Naive thymus-derived CD4-positive, alpha-beta T cell (primary cell): ENCODE measurements at regions of chr21 and their contacts with region 1.

Region 1: GRCh38 chr21:37267269-37268184 is at the start of gene VPS26C:
- DNase-seq: peak; percentile 91 to 98 (median 97)
- ATAC-seq: peak; percentile 93
- H3K4me3 ChIP-seq: peak within 1 kb of the TSS; percentile 95
- H3K4me3 Mint-ChIP-seq: peak within 1 kb of the TSS; percentile 88 to 96 (median 94)
- H3K27ac ChIP-seq: peak within 1 kb of the TSS; percentile 90
- H3K27ac Mint-ChIP-seq: peak within 1 kb of the TSS; percentile 94 to 99 (median 98)
- H3K4me1 ChIP-seq: peaks cover 5 to 7% of the 10 kb centered on the region in 2 donors
- H3K4me1 Mint-ChIP-seq: peaks cover 14 to 62% (median 46%) of the 10 kb centered on the region in 7 donors
- H3K27me3 ChIP-seq: no peaks in the 10 kb centered on the region
- H3K27me3 Mint-ChIP-seq: peaks cover 0 to 11% (median 0%) of the 10 kb centered on the region in 5 donors
- total RNA-seq, gene VPS26C: 46.8 to 83.5 (median 77.7) TPM

Region 2: DNA sequence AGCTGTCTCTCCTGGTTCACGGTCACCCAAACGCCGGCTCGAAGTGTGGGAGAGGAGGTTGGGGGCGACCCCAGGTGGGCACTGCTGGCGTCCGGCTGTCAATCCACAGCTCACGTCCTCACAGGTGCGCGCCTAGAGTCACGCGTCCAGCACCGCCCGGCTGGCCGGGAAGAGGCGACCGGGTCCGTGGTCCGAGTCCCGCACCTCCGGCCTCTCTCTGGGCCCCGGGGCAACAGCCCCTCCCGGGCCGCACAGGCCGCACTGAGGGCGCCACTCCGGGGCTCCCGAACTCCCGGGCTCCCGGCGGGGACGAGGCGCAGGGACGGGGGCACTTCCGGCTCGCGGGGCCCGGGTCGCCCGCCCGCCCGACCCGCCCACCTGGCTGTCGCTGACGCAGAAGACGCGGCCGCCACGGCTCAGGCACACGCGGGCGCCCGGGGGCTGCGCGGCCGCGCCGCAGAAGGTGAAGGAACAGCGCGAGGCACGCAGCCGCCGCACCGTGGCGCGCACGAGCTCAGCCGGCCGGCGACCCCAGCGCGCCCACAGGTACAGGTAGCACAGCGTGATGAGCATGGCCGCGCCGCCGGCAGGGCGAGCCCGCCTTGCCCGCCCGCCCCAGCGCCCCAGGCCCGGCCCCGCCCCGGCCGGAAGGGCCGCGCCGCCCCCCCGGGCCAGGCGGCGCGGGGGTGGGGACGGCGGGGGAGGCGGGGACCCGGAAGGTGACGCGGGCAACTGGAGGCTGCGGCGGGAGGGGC is 301.3 kb before region 1 on chr21 and contains the start of gene HLCS:
- CTCF ChIA-PET with region 1: no interaction called
- POLR2A ChIA-PET with region 1: no interaction called
- intact Hi-C with region 1: loop called (anchors 5 kb)
- DNase-seq: peak; percentile 62 to 79 (median 72)
- ATAC-seq: peak; percentile 93
- H3K4me3 ChIP-seq: peak within 1 kb of the TSS; percentile 52
- H3K4me3 Mint-ChIP-seq: peak within 1 kb of the TSS; percentile 80 to 91 (median 85)
- H3K27ac ChIP-seq: peak within 1 kb of the TSS; percentile 75
- H3K27ac Mint-ChIP-seq: peak within 1 kb of the TSS; percentile 77 to 92 (median 91)
- H3K4me1 ChIP-seq: peaks cover 0 to 6% of the 10 kb centered on the region in 2 donors
- H3K4me1 Mint-ChIP-seq: peaks cover 8 to 25% (median 12%) of the 10 kb centered on the region in 7 donors
- H3K27me3 ChIP-seq: no peaks in the 10 kb centered on the region
- H3K27me3 Mint-ChIP-seq: no peaks in the 10 kb centered on the region
- total RNA-seq, gene HLCS: 8.8 to 19.3 (median 12.2) TPM

Region 3: DNA sequence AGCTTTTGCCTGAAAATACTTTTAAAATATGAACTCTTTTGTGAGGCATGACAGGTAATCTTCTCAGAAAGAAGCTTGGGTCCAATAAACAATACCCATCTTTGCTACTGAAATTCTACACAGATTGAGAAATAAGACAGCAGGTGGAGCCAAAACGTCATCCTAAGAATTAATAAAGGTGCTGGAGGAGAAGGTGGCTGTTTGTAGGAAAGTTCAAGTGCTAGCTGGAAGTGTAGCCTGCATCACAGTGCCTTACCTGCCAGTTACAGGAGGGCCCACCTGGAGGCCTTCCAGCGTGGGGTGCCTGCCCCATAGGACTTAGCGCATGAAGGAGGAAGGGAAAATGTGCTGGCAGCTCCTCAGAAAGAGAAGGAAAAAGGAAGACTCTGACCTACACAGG is 100.8 kb before region 1 on chr21:
- CTCF ChIA-PET with region 1: no interaction called
- POLR2A ChIA-PET with region 1: no interaction called
- intact Hi-C with region 1: loop called in 1 of 2 experiments (anchors 5 kb)
- DNase-seq: peak in 3 of 9 donors; percentile 2 to 8 (median 5)
- ATAC-seq: no peak
- H3K4me3 ChIP-seq: no peak overlapping the region
- H3K4me3 Mint-ChIP-seq: no peak overlapping the region
- H3K27ac ChIP-seq: no peak overlapping the region
- H3K27ac Mint-ChIP-seq: peak overlapping the region in 2 of 9 donors; percentile 67 to 88
- H3K4me1 ChIP-seq: no peaks in the 10 kb centered on the region
- H3K4me1 Mint-ChIP-seq: peaks cover 0 to 12% (median 3%) of the 10 kb centered on the region in 7 donors
- H3K27me3 ChIP-seq: no peaks in the 10 kb centered on the region
- H3K27me3 Mint-ChIP-seq: no peaks in the 10 kb centered on the region

Region 4: GRCh38 chr21:37208056-37208721 is 59.3 kb before region 1 on chr21:
- CTCF ChIA-PET with region 1: no interaction called
- POLR2A ChIA-PET with region 1: no interaction called
- intact Hi-C with region 1: no loop called
- DNase-seq: peak in 1 of 9 donors; percentile 34
- ATAC-seq: peak; percentile 86
- H3K4me3 ChIP-seq: no peak overlapping the region
- H3K4me3 Mint-ChIP-seq: peak overlapping the region in 8 of 10 donors; percentile 3 to 77 (median 44)
- H3K27ac ChIP-seq: no peak overlapping the region
- H3K27ac Mint-ChIP-seq: peak overlapping the region in 5 of 9 donors; percentile 0 to 78 (median 35)
- H3K4me1 ChIP-seq: no peaks in the 10 kb centered on the region
- H3K4me1 Mint-ChIP-seq: peaks cover 10 to 19% (median 15%) of the 10 kb centered on the region in 7 donors
- H3K27me3 ChIP-seq: no peaks in the 10 kb centered on the region
- H3K27me3 Mint-ChIP-seq: peaks cover 0 to 7% (median 3%) of the 10 kb centered on the region in 5 donors

Region 5: DNA sequence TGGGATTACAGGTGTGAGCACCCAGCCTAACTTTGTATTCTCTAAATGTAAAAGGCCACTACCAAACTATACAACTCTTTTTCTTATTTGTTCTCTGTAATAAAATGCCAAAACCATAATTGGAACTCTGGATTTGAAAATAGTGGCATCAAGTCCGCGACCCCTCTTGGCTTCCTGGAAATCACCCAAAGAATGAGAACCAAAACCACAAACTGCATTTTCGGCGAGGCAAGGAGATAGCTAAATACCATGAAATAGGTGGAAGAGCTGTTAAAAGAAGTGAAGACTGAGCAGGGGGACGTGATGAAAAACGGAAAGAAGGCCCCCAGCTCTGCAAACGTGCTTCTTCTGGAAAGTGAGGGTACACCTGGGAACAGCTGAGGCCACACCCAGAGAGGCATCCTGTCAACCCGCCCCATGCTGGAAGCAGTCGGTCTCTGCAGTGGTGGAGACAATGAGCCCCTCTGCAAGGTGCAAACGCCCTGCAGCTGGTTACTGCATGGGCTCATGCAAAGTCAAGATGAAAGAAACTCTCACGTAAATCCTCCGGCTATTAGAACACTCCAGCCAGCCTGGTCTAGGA is 22.9 kb before region 1 on chr21:
- CTCF ChIA-PET with region 1: no interaction called
- POLR2A ChIA-PET with region 1: interaction called, 8 read pairs
- intact Hi-C with region 1: loop called in 1 of 2 experiments (anchors 2 kb)
- DNase-seq: peak in 1 of 9 donors; percentile 11
- ATAC-seq: peak; percentile 18
- H3K4me3 ChIP-seq: no peak overlapping the region
- H3K4me3 Mint-ChIP-seq: peak overlapping the region; percentile 54 to 87 (median 73)
- H3K27ac ChIP-seq: peak overlapping the region; percentile 39
- H3K27ac Mint-ChIP-seq: peak overlapping the region; percentile 60 to 88 (median 78)
- H3K4me1 ChIP-seq: peaks cover 20 to 21% of the 10 kb centered on the region in 2 donors
- H3K4me1 Mint-ChIP-seq: peaks cover 56 to 78% (median 72%) of the 10 kb centered on the region in 7 donors
- H3K27me3 ChIP-seq: no peaks in the 10 kb centered on the region
- H3K27me3 Mint-ChIP-seq: no peaks in the 10 kb centered on the region

Region 6: DNA sequence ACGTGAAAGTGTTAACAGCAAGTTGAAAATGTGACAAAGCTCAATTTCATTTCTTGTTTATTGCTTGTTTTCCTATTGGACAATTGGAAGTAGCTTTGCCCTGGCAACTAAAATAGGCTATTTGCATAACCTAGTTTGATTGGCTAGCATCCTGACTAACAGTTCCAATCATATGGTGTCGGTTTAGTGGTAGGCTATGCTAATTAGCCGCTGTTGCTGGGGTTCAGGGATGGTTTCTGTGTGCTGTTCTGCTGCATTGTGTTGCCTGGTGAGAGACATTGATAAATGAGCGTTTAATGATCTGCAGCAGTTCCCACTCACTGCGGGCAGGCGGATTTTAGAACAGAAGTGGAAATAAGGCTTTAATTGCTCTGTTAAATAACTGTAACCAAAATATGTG is 167.6 kb after region 1 on chr21:
- CTCF ChIA-PET with region 1: no interaction called
- POLR2A ChIA-PET with region 1: interaction called, 5 read pairs
- intact Hi-C with region 1: loop called (anchors 1 kb)
- DNase-seq: peak in 7 of 9 donors; percentile 58 to 85 (median 78)
- ATAC-seq: peak; percentile 99
- H3K4me3 ChIP-seq: no peak overlapping the region
- H3K4me3 Mint-ChIP-seq: no peak overlapping the region
- H3K27ac ChIP-seq: peak overlapping the region; percentile 4
- H3K27ac Mint-ChIP-seq: no peak overlapping the region
- H3K4me1 ChIP-seq: peaks cover 28 to 49% of the 10 kb centered on the region in 2 donors
- H3K4me1 Mint-ChIP-seq: peaks cover 39 to 61% (median 41%) of the 10 kb centered on the region in 7 donors
- H3K27me3 ChIP-seq: no peaks in the 10 kb centered on the region
- H3K27me3 Mint-ChIP-seq: no peaks in the 10 kb centered on the region